ENCODE measurements at regions of chr15 and their contacts with region 1.

Region 1: DNA sequence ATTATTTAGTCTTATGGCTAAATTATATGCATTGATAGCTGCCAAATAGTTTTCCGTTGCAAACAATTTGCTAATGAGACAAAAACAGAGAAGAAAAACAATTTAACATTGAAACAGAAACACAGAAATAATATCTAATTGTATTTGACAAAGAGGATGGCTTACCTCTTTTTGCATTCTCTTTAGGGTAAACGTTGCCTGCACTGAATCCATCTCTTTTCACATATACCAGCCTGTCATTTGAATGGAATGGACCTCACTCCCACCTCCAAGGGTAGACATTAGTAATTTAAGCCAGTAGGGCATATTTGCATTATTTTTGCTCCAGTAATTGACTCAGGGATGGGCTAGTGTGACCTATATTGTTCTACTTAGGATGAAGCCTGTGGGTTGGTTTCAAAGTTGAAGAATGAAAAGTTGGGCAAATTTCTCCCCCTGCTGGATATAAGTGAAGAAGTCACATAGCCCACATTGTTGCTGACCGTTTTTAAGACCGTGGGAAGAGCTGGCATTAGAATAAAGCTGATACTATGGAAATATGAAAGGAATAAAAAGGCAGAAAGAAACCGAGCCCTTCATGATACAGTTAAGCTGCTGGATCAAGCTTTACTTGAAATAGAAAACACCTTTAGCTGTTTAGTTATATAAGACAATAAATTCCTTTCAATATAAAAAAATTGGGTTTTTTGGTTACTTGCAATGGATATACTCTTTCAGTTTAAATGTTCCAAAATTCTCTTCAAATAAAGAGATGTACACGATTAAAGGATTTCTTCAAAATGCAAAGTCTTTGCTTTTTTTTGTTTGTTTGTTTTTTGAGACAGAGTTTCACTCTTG is 26.9 kb downstream of the PIERCE2 start:
- DNase-seq: no peak
- H3K4me3 ChIP-seq: no peak overlapping the region
- H3K27ac ChIP-seq: no peak overlapping the region
- H3K4me1 ChIP-seq: peaks cover 0 to 15% (median 0%) of the 10 kb centered on the region in 6 donors
- H3K27me3 ChIP-seq: no peaks in the 10 kb centered on the region
- CTCF ChIP-seq: peak in 10 of 11 experiments; percentile 20 to 73 (median 52)
- POLR2A ChIP-seq: no peak

Region 2: GRCh38 chr15:55221090-55222011 is 213.9 kb before region 1 on chr15:
- intact Hi-C with region 1: loop called (anchors 5 kb)
- DNase-seq: no peak
- H3K4me3 ChIP-seq: peak overlapping the region in 1 of 8 donors; percentile 50
- H3K27ac ChIP-seq: peak overlapping the region; percentile 29 to 93 (median 76)
- H3K4me1 ChIP-seq: peaks cover 22 to 95% (median 71%) of the 10 kb centered on the region in 6 donors
- H3K27me3 ChIP-seq: no peaks in the 10 kb centered on the region
- CTCF ChIP-seq: no peak
- POLR2A ChIP-seq: no peak

Region 3: DNA sequence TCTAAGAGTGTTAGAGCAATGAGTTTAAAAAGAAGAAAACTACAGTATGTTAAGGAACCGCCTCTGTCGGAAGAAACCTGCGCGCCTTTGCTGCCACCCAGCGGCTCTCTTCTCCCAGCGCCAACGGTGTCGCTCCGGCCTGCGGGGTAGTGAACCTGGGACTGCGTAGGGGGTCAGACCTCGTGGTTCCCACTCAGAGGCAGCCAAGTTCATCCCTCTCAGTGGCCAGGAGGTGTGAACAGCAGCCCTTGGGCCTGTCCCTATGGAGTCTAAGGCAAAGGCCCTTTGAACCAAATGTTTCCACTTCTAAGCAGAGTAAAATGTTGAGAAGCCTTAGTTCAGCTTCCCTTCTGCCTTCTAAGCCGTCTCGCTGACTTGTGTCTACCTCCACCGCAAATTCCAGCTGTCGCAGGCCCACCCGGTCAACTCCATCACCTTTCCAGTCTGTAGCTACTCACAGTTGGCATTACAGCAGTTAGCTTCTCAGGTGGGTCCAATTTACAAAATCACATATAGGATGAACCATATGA is 144.6 kb before region 1 on chr15:
- intact Hi-C with region 1: loop called (anchors 10 kb)
- DNase-seq: peak; percentile 97
- H3K4me3 ChIP-seq: peak overlapping the region; percentile 58 to 96 (median 86)
- H3K27ac ChIP-seq: peak overlapping the region; percentile 79 to 98 (median 94)
- H3K4me1 ChIP-seq: peaks cover 0 to 60% (median 32%) of the 10 kb centered on the region in 6 donors
- H3K27me3 ChIP-seq: no peaks in the 10 kb centered on the region
- CTCF ChIP-seq: peak; percentile 80 to 95 (median 91)
- POLR2A ChIP-seq: no peak